PC-9 (cell line): ENCODE measurements at regions of chr7 and their contacts with region 1.

Region 1: GRCh38 chr7:27677912-27678612 is 15.4 kb upstream of the HIBADH start:
- DNase-seq: peak; percentile 51 to 98
- H3K4me3 ChIP-seq: peak overlapping the region; percentile 11; the same call in 1 of the 2 replicates
- H3K27ac ChIP-seq: peak overlapping the region; percentile 98
- H3K4me1 ChIP-seq: peaks cover 33% of the 10 kb centered on the region
- H3K27me3 ChIP-seq: no peaks in the 10 kb centered on the region
- CTCF ChIP-seq: no peak

Region 2: GRCh38 chr7:27640914-27641580 is 37.0 kb before region 1 on chr7:
- CTCF ChIA-PET with region 1: no interaction called
- POLR2A ChIA-PET with region 1: no interaction called
- intact Hi-C with region 1: loop called (anchors 2 kb)
- DNase-seq: peak; percentile 87 to 96
- H3K4me3 ChIP-seq: peak overlapping the region; percentile 8; the same call in 1 of the 2 replicates
- H3K27ac ChIP-seq: peak overlapping the region; percentile 90
- H3K4me1 ChIP-seq: peaks cover 37% of the 10 kb centered on the region
- H3K27me3 ChIP-seq: no peaks in the 10 kb centered on the region
- CTCF ChIP-seq: peak; percentile 40; the same call in 1 of the 2 replicates

Region 3: GRCh38 chr7:27784393-27785053 is 106.5 kb after region 1 on chr7:
- CTCF ChIA-PET with region 1: interaction called, 10 read pairs
- POLR2A ChIA-PET with region 1: no interaction called
- intact Hi-C with region 1: no loop called
- DNase-seq: peak; percentile 53 to 98
- H3K4me3 ChIP-seq: no peak overlapping the region
- H3K27ac ChIP-seq: no peak overlapping the region
- H3K4me1 ChIP-seq: peaks cover 25% of the 10 kb centered on the region
- H3K27me3 ChIP-seq: no peaks in the 10 kb centered on the region
- CTCF ChIP-seq: peak; percentile 92